CD8-positive, alpha-beta memory T cell (primary cell): ENCODE measurements at regions of chr2 and their contacts with region 1.

Region 1: GRCh38 chr2:174771631-174772471 is 7.6 kb upstream of the CHRNA1 start:
- DNase-seq: peak in 1 of 5 donors; percentile 66
- H3K4me3 ChIP-seq: no peak overlapping the region
- H3K4me3 Mint-ChIP-seq: no peak overlapping the region
- H3K27ac ChIP-seq: no peak overlapping the region
- H3K27ac Mint-ChIP-seq: peak overlapping the region in 6 of 8 donors; percentile 20 to 85 (median 60)
- H3K4me1 ChIP-seq: peaks cover 11% of the 10 kb centered on the region
- H3K4me1 Mint-ChIP-seq: peaks cover 5 to 19% (median 16%) of the 10 kb centered on the region in 3 donors
- H3K27me3 ChIP-seq: no peaks in the 10 kb centered on the region
- H3K27me3 Mint-ChIP-seq: peaks cover 0 to 12% of the 10 kb centered on the region in 2 donors

Region 2: DNA sequence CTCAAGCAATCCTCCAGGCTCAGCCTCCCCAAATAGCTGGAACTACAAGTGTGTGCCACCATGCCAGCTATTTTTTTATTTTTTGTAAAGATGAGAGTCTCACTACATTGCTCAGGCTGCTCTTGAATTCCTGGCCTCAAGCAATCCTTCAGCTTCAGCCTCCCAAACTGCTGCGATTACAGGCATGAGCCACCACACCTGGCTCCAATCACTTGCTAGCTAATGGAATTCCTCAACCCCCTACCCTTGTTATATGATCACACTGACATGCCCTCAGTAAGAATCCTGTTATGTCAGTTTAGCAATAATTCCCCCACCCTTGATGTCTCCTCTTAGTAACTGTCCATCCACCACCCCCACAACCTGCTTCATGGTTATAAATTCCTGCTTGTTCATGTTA is 221.0 kb after region 1 on chr2:
- CTCF ChIA-PET with region 1: interaction called, 49 read pairs
- POLR2A ChIA-PET with region 1: no interaction called
- DNase-seq: no peak
- H3K4me3 ChIP-seq: no peak overlapping the region
- H3K4me3 Mint-ChIP-seq: no peak overlapping the region
- H3K27ac ChIP-seq: no peak overlapping the region
- H3K27ac Mint-ChIP-seq: no peak overlapping the region
- H3K4me1 ChIP-seq: no peaks in the 10 kb centered on the region
- H3K4me1 Mint-ChIP-seq: peaks cover 0 to 9% (median 8%) of the 10 kb centered on the region in 3 donors
- H3K27me3 ChIP-seq: no peaks in the 10 kb centered on the region
- H3K27me3 Mint-ChIP-seq: peaks cover 2 to 6% of the 10 kb centered on the region in 2 donors